CD4-positive, alpha-beta T cell (primary cell): ENCODE measurements at regions of chr1 and their contacts with region 1.

Region 1: GRCh38 chr1:52404116-52404986 is at the starts of genes ORC1 and PRPF38A:
- DNase-seq: peak; percentile 94 to 100 (median 97)
- ATAC-seq: peak; percentile 89
- H3K4me3 ChIP-seq: peak within 1 kb of the TSS; percentile 62
- H3K4me3 Mint-ChIP-seq: peak within 1 kb of the TSS; percentile 98
- H3K27ac ChIP-seq: peak within 1 kb of the TSS; percentile 88 to 89
- H3K27ac Mint-ChIP-seq: peak within 1 kb of the TSS; percentile 99
- H3K4me1 ChIP-seq: peaks cover 13% of the 10 kb centered on the region
- H3K4me1 Mint-ChIP-seq: peaks cover 48% of the 10 kb centered on the region
- H3K27me3 ChIP-seq: no peaks in the 10 kb centered on the region
- H3K27me3 Mint-ChIP-seq: no peaks in the 10 kb centered on the region
- CTCF ChIP-seq: peak; percentile 34
- total RNA-seq, gene ORC1: 1.1 to 1.3 TPM
- total RNA-seq, gene PRPF38A: 56.2 to 63.6 TPM

Region 2: GRCh38 chr1:50516056-50516455 is 1888.3 kb before region 1 on chr1:
- CTCF ChIA-PET with region 1: no interaction called
- POLR2A ChIA-PET with region 1: no interaction called
- intact Hi-C with region 1: no loop called
- DNase-seq: no peak
- ATAC-seq: no peak
- H3K4me3 ChIP-seq: no peak overlapping the region
- H3K4me3 Mint-ChIP-seq: no peak overlapping the region
- H3K27ac ChIP-seq: no peak overlapping the region
- H3K27ac Mint-ChIP-seq: no peak overlapping the region
- H3K4me1 ChIP-seq: no peaks in the 10 kb centered on the region
- H3K4me1 Mint-ChIP-seq: no peaks in the 10 kb centered on the region
- H3K27me3 ChIP-seq: no peaks in the 10 kb centered on the region
- H3K27me3 Mint-ChIP-seq: no peaks in the 10 kb centered on the region
- CTCF ChIP-seq: no peak

Region 3: DNA sequence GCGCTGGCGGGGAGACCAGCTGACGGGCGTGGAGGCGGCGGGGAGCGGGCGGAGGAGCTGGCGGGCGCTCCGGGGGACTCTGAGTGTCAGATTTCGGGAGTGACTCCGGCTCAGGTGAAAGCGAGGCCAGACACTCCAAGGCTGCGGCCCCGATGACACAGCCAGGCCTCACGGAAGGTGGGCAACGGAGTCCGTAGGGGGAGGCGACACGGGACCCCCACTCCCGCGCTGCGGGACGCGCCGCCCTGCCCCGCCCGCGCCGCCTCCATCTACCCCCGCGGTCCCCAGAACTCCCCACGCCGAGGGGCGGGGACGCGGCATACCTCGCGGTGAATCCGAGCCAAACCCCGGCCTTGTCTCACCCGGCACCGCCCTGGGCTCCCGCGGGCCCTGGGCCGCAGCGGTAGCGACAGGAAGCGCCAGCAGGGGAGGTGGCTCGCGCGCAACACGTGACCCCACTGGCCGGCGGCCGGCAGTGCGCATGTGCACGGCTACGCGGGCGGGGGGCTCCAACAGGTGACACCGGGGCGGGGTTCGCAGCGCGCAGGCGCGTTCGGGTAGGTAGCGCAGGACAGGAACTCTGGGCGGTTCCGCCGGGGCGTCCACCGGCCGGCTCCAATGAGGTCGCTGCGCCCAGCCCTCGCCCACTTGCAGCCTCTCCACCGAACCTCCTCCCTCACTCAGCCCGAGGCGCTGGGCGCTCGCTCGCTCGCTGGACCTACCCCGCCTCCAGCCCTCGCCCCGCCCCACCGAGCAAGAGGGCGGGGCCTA is 38.4 kb before region 1 on chr1 and contains the start of gene CC2D1B:
- CTCF ChIA-PET with region 1: interaction called, 14 read pairs
- POLR2A ChIA-PET with region 1: interaction called, 61 read pairs
- intact Hi-C with region 1: loop called (anchors 1 kb)
- DNase-seq: peak; percentile 97 to 100 (median 99)
- ATAC-seq: peak; percentile 79
- H3K4me3 ChIP-seq: peak within 1 kb of the TSS; percentile 76
- H3K4me3 Mint-ChIP-seq: peak within 1 kb of the TSS; percentile 94
- H3K27ac ChIP-seq: peak within 1 kb of the TSS; percentile 77 to 89
- H3K27ac Mint-ChIP-seq: peak within 1 kb of the TSS; percentile 96
- H3K4me1 ChIP-seq: peaks cover 50% of the 10 kb centered on the region
- H3K4me1 Mint-ChIP-seq: peaks cover 60% of the 10 kb centered on the region
- H3K27me3 ChIP-seq: no peaks in the 10 kb centered on the region
- H3K27me3 Mint-ChIP-seq: no peaks in the 10 kb centered on the region
- CTCF ChIP-seq: no peak
- total RNA-seq, gene CC2D1B: 46.5 to 47.5 TPM

Region 4: DNA sequence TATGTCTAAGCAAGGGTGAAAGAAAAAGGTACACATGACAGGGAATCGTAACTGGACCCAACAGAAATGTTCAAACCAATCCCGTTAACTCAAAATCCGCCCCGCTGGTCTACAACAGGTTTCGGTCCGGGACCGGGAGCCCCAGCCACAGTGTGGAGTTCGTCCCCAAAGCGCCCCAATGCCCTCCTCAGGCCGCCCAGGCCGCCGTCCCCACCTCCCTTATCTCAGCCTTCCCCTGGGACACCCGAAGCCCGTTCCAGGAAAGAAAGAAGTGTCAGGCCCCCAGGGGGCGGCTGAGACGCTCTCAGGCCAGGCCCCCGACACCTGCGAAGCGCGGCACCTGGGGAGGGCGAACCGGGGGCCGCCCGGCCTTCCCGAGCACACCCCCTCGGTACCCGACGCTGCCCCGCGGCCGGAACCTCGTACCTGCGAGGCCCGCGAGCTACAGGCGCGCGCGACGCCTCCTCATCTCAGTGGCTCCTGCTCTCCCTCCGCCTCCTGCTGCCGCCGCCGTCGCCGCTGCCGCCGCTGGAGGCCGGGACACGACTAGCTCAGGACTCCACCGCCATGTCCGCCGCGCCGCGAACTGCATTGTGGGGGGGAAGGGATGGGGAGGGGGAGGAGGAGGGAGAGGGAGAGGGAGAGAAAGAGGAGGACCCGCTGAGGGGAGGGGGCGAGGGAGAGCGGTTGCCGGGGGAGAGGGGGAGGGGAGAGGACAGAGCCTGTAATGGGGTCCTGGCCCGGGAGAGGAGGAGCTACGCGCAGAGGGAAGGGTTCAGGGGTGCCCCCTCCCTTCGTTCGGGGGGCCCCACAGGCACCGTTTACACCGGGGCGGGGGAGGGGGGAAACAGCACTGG is 148.4 kb after region 1 on chr1 and contains the start of gene TUT4:
- CTCF ChIA-PET with region 1: interaction called, 5 read pairs
- POLR2A ChIA-PET with region 1: interaction called, 21 read pairs
- intact Hi-C with region 1: no loop called
- DNase-seq: peak; percentile 58 to 89 (median 70)
- ATAC-seq: peak; percentile 35
- H3K4me3 ChIP-seq: peak within 1 kb of the TSS; percentile 92
- H3K4me3 Mint-ChIP-seq: peak within 1 kb of the TSS; percentile 84
- H3K27ac ChIP-seq: peak within 1 kb of the TSS; percentile 91 to 94
- H3K27ac Mint-ChIP-seq: peak within 1 kb of the TSS; percentile 90
- H3K4me1 ChIP-seq: peaks cover 18% of the 10 kb centered on the region
- H3K4me1 Mint-ChIP-seq: peaks cover 47% of the 10 kb centered on the region
- H3K27me3 ChIP-seq: no peaks in the 10 kb centered on the region
- H3K27me3 Mint-ChIP-seq: no peaks in the 10 kb centered on the region
- CTCF ChIP-seq: peak; percentile 23
- total RNA-seq, gene TUT4: 141 to 147 TPM

Region 5: DNA sequence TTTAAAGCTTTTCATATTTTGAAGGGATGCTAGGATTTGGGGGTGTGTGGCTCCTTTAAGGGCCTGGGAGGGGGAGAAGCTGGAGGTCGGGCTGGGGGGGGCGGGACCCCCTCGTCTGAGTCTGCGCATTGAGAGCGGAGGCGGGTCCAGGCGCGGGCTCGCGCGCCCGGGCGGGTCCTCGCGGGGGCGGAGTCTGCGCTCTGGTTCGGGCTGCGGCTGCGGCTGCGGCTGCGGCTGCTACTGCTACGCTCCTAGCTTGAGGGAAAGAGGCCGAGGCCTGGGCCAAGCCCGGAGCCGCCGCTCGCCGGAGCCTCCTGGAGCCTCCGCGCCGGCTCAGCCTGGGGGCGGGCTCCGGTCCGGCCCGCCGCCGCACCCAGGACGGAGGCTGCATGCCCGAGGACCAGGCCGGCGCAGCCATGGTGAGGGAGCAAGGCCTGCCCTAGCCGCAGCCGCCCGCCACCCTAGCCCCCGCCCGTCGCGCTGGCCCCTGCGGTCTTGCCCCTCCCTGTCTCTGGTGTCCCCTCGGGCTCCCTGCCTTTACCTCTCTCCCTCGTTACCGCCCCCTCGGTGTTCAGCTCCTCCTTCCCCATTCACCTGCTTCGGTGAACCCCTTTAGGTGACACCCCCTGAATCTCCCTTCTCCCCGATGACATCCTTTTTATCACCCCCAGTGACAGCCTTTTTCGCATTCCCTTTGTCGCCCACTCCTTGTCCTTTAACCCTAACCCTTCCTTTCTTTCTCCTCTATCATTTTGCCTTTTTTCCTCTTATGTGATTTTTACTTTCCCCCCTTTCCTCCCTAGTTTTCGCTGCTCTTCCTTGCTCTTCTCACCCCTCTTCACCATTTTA is 322.1 kb after region 1 on chr1 and contains the start of gene ZYG11B:
- CTCF ChIA-PET with region 1: no interaction called
- POLR2A ChIA-PET with region 1: interaction called, 9 read pairs
- intact Hi-C with region 1: loop called in 1 of 2 experiments (anchors 2 kb)
- DNase-seq: peak; percentile 85 to 96 (median 92)
- ATAC-seq: peak; percentile 91
- H3K4me3 ChIP-seq: peak within 1 kb of the TSS; percentile 79
- H3K4me3 Mint-ChIP-seq: peak within 1 kb of the TSS; percentile 95
- H3K27ac ChIP-seq: peak within 1 kb of the TSS in 1 of 2 donors; percentile 45
- H3K27ac Mint-ChIP-seq: peak within 1 kb of the TSS; percentile 77
- H3K4me1 ChIP-seq: peaks cover 36% of the 10 kb centered on the region
- H3K4me1 Mint-ChIP-seq: peaks cover 54% of the 10 kb centered on the region
- H3K27me3 ChIP-seq: no peaks in the 10 kb centered on the region
- H3K27me3 Mint-ChIP-seq: no peaks in the 10 kb centered on the region
- CTCF ChIP-seq: no peak
- total RNA-seq, gene ZYG11B: 14.1 to 16.1 TPM